IMR-90 (cell line): ENCODE measurements at regions of chr3 and their contacts with region 1.

Region 1: DNA sequence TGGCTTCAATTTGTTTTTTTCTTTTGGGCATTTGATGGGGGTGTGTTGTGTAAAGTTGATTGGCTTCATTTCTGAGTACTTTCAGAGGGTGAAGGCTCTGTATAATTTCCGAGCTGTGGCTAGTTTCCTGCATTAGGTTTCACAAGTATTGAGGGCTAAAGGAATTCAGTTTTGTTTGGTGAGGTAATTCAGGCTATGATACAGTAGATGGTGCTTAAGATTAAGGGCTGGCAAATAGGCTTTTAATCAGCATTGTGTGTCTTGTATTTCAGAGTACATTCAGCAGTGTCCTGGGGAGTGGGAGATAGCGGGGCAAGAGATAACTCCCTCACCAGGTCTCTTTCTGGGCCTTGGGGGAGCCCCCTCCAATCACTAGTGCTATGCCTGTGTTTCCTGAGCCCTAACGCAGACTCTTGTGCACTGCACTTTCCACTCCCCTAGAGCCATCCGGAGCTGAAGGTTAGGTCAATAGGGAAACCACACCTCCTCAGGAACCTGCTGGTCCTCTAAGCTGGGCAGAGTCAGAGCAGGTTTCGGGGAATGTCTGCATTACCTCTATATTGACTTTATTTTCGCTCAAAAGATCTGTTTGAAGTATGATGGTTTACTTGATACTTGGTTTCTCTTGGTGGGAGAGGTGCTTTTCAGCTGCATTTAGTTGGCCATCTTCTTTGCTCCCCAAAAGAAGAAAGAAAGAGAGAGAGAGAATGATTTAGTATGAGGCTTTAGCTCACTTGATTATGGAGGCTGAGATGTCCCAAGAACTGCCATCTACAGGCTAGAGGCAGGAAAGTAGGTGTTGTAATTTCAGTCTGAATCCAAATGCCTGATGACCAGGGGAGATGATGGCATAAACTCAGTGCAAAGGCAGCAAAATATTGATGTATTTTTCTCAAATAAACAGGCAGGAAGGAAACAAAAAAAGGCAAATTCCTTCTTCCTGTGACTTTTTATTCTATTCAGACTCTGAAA is 617.0 kb upstream of the ROBO1 start:
- DNase-seq: no peak
- ATAC-seq: no peak
- H3K4me3 ChIP-seq: no peak overlapping the region
- H3K27ac ChIP-seq: no peak overlapping the region
- H3K4me1 ChIP-seq: no peaks in the 10 kb centered on the region
- H3K27me3 ChIP-seq: no peaks in the 10 kb centered on the region
- CTCF ChIP-seq: no peak
- POLR2A ChIP-seq: no peak
- RAD21 ChIP-seq: no peak

Region 2: DNA sequence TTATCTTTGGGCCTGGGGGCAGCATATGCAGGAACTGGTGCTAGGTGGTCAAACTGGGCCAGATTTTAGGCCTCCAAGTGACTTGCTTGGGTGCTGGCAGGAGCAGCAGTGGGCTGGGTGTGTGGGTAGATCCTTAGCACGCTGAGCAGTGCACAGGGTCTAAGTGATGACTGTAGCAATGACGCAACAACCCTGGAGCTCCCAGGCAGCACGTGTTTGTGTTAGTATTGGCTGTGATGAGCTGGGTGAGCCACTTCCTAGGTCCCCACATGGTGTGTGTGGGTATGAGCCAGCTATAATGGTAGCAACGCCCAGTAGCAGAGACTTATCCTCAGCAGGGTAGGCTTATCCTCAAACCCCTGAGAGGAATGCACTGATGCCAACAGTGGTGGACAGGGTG is 46.5 kb before region 1 on chr3:
- CTCF ChIA-PET with region 1: no interaction called
- POLR2A ChIA-PET with region 1: no interaction called
- dilution Hi-C with region 1: no loop called
- in situ Hi-C with region 1: no loop called
- intact Hi-C with region 1: loop called (anchors 1 kb)
- DNase-seq: no peak
- ATAC-seq: no peak
- H3K4me3 ChIP-seq: no peak overlapping the region
- H3K27ac ChIP-seq: no peak overlapping the region
- H3K4me1 ChIP-seq: no peaks in the 10 kb centered on the region
- H3K27me3 ChIP-seq: no peaks in the 10 kb centered on the region
- CTCF ChIP-seq: no peak
- POLR2A ChIP-seq: no peak
- RAD21 ChIP-seq: no peak

Region 3: GRCh38 chr3:80434366-80434765 is 49.5 kb after region 1 on chr3:
- CTCF ChIA-PET with region 1: no interaction called
- POLR2A ChIA-PET with region 1: no interaction called
- dilution Hi-C with region 1: no loop called
- in situ Hi-C with region 1: no loop called
- intact Hi-C with region 1: no loop called
- DNase-seq: no peak
- ATAC-seq: no peak
- H3K4me3 ChIP-seq: no peak overlapping the region
- H3K27ac ChIP-seq: no peak overlapping the region
- H3K4me1 ChIP-seq: no peaks in the 10 kb centered on the region
- H3K27me3 ChIP-seq: no peaks in the 10 kb centered on the region
- CTCF ChIP-seq: no peak
- POLR2A ChIP-seq: no peak
- RAD21 ChIP-seq: no peak